Right lobe of liver (tissue), 6 donors: ENCODE measurements at regions of chr14 and their contacts with region 1.

Region 1: GRCh38 chr14:56474419-56475022 is 105.1 kb upstream of the TMEM260 start:
- DNase-seq: no peak
- ATAC-seq: peak; percentile 69 to 70 (median 70)
- H3K4me3 ChIP-seq: no peak overlapping the region
- H3K27ac ChIP-seq: no peak overlapping the region
- H3K4me1 ChIP-seq: no peaks in the 10 kb centered on the region
- H3K27me3 ChIP-seq: no peaks in the 10 kb centered on the region
- CTCF ChIP-seq: peak; percentile 76 to 81 (median 80)
- POLR2A ChIP-seq: no peak

Region 2: DNA sequence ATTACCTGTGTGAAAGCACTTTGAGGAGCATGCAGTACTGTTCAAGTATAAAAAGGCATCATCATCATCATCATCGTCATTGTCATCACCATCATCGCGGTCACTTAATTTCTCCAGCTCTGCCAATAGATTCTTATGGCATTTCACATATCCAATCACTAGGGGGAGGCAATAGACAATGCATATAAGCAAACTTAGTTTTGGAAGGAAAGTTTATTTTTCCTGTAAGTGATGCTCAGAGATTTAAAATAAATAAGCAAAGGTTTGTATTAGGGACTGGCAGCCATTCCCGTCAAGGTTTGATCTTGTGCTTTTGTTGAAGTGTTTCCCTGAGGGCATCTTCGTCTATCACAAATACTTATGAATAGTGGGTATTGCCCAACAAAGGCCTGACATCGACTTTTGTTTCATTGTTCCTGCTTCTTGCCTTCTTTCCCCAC is 767.1 kb before region 1 on chr14:
- intact Hi-C with region 1: loop called in 1 of 2 experiments (anchors 10 kb)
- DNase-seq: no peak
- ATAC-seq: peak; percentile 54 to 82 (median 56)
- H3K4me3 ChIP-seq: no peak overlapping the region
- H3K27ac ChIP-seq: no peak overlapping the region
- H3K4me1 ChIP-seq: peaks cover 0 to 2% (median 0%) of the 10 kb centered on the region in 4 donors
- H3K27me3 ChIP-seq: no peaks in the 10 kb centered on the region
- CTCF ChIP-seq: peak; percentile 55 to 71 (median 64)
- POLR2A ChIP-seq: no peak

Region 3: GRCh38 chr14:56630707-56631106 is 156.2 kb after region 1 on chr14:
- intact Hi-C with region 1: no loop called
- DNase-seq: no peak
- ATAC-seq: peak; percentile 50 to 87 (median 60)
- H3K4me3 ChIP-seq: no peak overlapping the region
- H3K27ac ChIP-seq: no peak overlapping the region
- H3K4me1 ChIP-seq: no peaks in the 10 kb centered on the region
- H3K27me3 ChIP-seq: no peaks in the 10 kb centered on the region
- CTCF ChIP-seq: no peak
- POLR2A ChIP-seq: no peak